Calu3 (cell line): ENCODE measurements at regions of chr2 and their contacts with region 1.

Region 1: GRCh38 chr2:196849895-196850294 is 40.7 kb upstream of the C2orf66 start:
- DNase-seq: peak; percentile 42
- H3K4me3 Mint-ChIP-seq: no peak overlapping the region
- H3K27ac Mint-ChIP-seq: no peak overlapping the region
- H3K4me1 Mint-ChIP-seq: peaks cover 8% of the 10 kb centered on the region
- H3K27me3 Mint-ChIP-seq: no peaks in the 10 kb centered on the region
- CTCF ChIP-seq: no peak

Region 2: DNA sequence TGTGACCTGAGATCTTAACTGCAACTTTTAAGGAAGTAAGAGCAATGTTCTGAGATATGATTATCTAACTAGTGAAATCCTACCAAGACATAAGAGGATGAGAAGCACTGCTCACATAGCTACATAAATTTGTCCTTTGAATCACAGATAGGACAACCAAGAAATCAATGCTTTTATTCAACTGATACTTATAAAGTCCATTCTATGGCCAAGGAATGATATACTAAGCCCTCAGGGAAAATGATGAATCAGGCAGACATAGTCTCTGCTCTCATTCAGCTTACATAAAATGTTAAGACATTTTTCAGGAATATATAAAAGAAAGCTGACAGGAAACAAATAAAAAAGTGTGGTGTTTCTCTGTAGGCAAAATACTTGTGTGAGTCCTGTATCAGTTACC is 37.5 kb after region 1 on chr2:
- CTCF ChIA-PET with region 1: no interaction called
- intact Hi-C with region 1: loop called (anchors 1 kb)
- DNase-seq: no peak
- H3K4me3 Mint-ChIP-seq: no peak overlapping the region
- H3K27ac Mint-ChIP-seq: no peak overlapping the region
- H3K4me1 Mint-ChIP-seq: no peaks in the 10 kb centered on the region
- H3K27me3 Mint-ChIP-seq: no peaks in the 10 kb centered on the region
- CTCF ChIP-seq: no peak

Region 3: GRCh38 chr2:196924051-196924450 is 74.2 kb after region 1 on chr2:
- CTCF ChIA-PET with region 1: no interaction called
- intact Hi-C with region 1: loop called (anchors 5 kb)
- DNase-seq: no peak
- H3K4me3 Mint-ChIP-seq: no peak overlapping the region
- H3K27ac Mint-ChIP-seq: no peak overlapping the region
- H3K4me1 Mint-ChIP-seq: peaks cover 18% of the 10 kb centered on the region
- H3K27me3 Mint-ChIP-seq: no peaks in the 10 kb centered on the region
- CTCF ChIP-seq: no peak